ENCODE measurements at regions of chr11 and their contacts with region 1.

Region 1: GRCh38 chr11:68257475-68258362 is 14.1 kb downstream of the C11orf24 start:
- DNase-seq: peak; percentile 97
- H3K4me3 ChIP-seq: peak overlapping the region; percentile 48
- H3K27ac ChIP-seq: peak overlapping the region; percentile 20
- H3K4me1 ChIP-seq: peaks cover 21% of the 10 kb centered on the region
- H3K27me3 ChIP-seq: no peaks in the 10 kb centered on the region
- CTCF ChIP-seq: peak; percentile 90

Region 2: GRCh38 chr11:68235650-68236049 is 22.1 kb before region 1 on chr11:
- intact Hi-C with region 1: no loop called
- DNase-seq: no peak
- H3K4me3 ChIP-seq: no peak overlapping the region
- H3K27ac ChIP-seq: no peak overlapping the region
- H3K4me1 ChIP-seq: no peaks in the 10 kb centered on the region
- H3K27me3 ChIP-seq: peaks cover 27% of the 10 kb centered on the region
- CTCF ChIP-seq: no peak

Region 3: GRCh38 chr11:68297812-68298658 is 40.3 kb after region 1 on chr11:
- intact Hi-C with region 1: loop called (anchors 2 kb)
- DNase-seq: peak; percentile 79
- H3K4me3 ChIP-seq: peak overlapping the region; percentile 22
- H3K27ac ChIP-seq: peak overlapping the region; percentile 48
- H3K4me1 ChIP-seq: peaks cover 19% of the 10 kb centered on the region
- H3K27me3 ChIP-seq: no peaks in the 10 kb centered on the region
- CTCF ChIP-seq: peak; percentile 99

Region 4: GRCh38 chr11:68447015-68447801 is 189.5 kb after region 1 on chr11:
- intact Hi-C with region 1: loop called (anchors 10 kb)
- DNase-seq: peak; percentile 78
- H3K4me3 ChIP-seq: no peak overlapping the region
- H3K27ac ChIP-seq: peak overlapping the region; percentile 20
- H3K4me1 ChIP-seq: peaks cover 15% of the 10 kb centered on the region
- H3K27me3 ChIP-seq: no peaks in the 10 kb centered on the region
- CTCF ChIP-seq: peak; percentile 97

Region 5: DNA sequence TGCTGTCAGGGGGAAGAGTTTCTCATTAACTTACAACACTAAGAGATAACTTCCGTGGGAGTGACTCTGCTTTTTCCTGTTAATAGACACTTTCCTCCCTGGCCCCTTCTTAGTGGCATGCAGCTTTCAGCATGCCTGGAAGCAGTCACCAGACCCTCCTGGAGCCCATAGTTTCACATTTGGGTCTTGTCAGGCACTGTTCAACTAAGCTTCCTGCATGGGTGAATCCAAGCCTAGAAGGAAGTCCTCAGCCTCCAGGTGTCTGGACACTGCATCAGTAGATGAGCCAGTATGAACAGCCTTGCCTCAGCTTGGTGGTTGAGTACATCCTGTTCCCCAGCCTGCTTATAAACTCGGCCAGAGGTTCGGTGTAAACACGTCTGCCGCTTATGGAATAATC is 270.9 kb after region 1 on chr11:
- intact Hi-C with region 1: no loop called
- DNase-seq: no peak
- H3K4me3 ChIP-seq: no peak overlapping the region
- H3K27ac ChIP-seq: peak overlapping the region; percentile 25
- H3K4me1 ChIP-seq: peaks cover 96% of the 10 kb centered on the region
- H3K27me3 ChIP-seq: no peaks in the 10 kb centered on the region
- CTCF ChIP-seq: no peak

Measured in left ventricle myocardium inferior (tissue), 1 donor.